ENCODE measurements at regions of chr19 and their contacts with region 1.

Region 1: DNA sequence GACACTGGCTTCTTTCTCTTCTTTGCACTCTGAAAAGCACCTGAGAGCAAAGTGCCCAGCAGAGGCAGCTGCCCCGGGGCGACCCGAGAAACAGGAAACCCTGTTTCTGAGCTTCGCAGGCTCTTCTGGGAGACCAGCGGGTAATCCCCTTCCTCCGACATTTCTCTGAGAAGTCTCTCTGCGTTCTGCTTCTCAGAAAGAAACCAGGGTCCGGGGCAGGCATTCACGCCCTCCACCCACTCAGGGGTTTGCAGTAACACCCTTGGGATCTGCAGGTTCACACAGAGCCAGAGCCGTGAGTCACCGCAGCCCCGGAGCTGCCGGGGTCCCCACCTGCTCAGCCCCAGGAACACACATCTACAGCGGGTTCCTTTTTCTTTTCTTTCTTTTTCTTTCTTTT is 86.0 kb downstream of the GADD45B start:
- DNase-seq: no peak
- H3K4me3 ChIP-seq: peak overlapping the region in 2 of 3 donors; percentile 32 to 41
- H3K27ac ChIP-seq: peak overlapping the region in 1 of 2 donors; percentile 17
- H3K4me1 ChIP-seq: no peaks in the 10 kb centered on the region
- H3K27me3 ChIP-seq: no peaks in the 10 kb centered on the region
- CTCF ChIP-seq: no peak
- POLR2A ChIP-seq: no peak

Region 2: GRCh38 chr19:4097501-4097900 is 1535.6 kb after region 1 on chr19:
- intact Hi-C with region 1: no loop called
- DNase-seq: no peak
- H3K4me3 ChIP-seq: no peak overlapping the region
- H3K27ac ChIP-seq: peak overlapping the region in 1 of 2 donors; percentile 32
- H3K4me1 ChIP-seq: no peaks in the 10 kb centered on the region
- H3K27me3 ChIP-seq: no peaks in the 10 kb centered on the region
- CTCF ChIP-seq: no peak
- POLR2A ChIP-seq: no peak

Region 3: GRCh38 chr19:4310247-4311121 is 1748.6 kb after region 1 on chr19:
- intact Hi-C with region 1: loop called (anchors 5 kb)
- DNase-seq: no peak
- H3K4me3 ChIP-seq: no peak overlapping the region
- H3K27ac ChIP-seq: no peak overlapping the region
- H3K4me1 ChIP-seq: no peaks in the 10 kb centered on the region
- H3K27me3 ChIP-seq: no peaks in the 10 kb centered on the region
- CTCF ChIP-seq: no peak
- POLR2A ChIP-seq: no peak